Activated B cell treated with CpG ODN at 0.5 μM for 24 hours (primary cell): ENCODE measurements at regions of chr16 and their contacts with region 1.

Region 1: DNA sequence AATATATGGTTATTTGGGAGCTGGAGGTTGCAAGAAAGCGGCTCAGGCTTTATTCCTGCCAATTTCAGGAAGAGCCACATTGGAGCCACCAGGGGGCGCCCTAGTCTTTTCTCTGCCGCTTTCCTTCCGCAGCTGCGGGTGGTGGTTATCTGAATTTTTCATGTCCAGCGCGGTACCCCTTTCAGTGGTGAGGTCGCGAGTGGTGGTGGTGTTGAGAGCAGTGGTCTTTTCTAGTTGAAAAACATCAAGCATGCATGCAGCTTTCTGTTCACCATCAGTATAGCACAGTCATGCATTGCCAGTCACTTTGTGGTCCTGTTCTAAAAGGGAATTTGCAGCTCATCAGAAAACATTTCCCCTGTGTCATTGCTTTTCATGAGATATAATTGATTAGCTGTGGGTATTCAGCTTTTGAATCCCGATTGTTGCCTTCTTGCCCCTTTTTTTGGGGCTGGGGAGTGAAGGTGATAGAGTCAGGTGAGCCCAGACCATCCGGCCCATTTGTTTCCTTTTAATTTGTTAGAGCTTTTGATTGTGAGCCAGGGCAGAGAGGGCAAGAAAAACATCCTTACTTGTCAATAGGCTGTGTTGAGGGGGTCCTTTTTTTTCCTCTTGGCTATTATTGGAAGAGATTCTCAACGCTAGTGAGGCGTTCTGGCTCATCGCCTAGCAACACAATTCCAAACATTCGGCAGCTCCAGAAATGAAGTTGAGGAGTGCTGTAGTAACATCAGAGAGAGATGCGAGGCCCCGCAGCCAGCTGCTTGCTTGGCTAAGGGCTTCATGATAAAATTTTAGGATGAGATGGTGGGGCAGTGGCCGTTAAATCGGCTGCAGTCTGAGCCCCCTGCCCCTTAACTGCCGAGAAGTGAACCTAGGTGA is 119.0 kb downstream of the SNX29 start:
- DNase-seq: peak; percentile 50
- ATAC-seq: no peak
- H3K4me3 Mint-ChIP-seq: peak overlapping the region; percentile 44
- H3K27ac Mint-ChIP-seq: no peak overlapping the region
- H3K4me1 Mint-ChIP-seq: peaks cover 26% of the 10 kb centered on the region
- H3K27me3 Mint-ChIP-seq: no peaks in the 10 kb centered on the region
- CTCF ChIP-seq: peak; percentile 52

Region 2: DNA sequence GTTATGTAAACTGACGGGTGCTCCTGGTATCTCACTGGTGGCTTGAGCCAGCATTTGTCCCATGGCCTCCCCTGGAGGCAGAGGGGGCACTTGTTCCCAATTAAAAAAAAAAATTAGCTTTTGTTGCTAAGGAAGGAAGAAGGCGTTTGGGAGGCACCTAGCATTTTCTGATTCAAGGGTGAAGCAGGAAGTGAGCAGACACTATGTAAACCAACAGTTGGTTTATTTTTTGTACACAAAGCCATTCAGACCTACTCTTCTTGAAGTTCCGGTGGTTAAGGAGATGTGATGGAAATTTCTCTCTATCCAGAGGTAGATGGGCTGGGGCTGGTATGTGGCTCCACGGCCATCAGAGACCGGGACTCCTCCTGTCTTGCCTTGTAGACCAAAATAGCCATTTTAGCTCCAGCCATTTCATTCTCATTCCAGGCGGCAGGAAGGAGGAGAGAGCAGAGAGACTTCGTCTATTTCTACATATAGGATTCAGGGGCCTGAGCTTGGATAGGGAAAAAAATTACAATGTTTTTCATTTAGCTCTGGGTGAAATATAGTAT is 16.0 kb before region 1 on chr16:
- CTCF ChIA-PET with region 1: interaction called, 13 read pairs
- POLR2A ChIA-PET with region 1: interaction called, 4 read pairs
- intact Hi-C with region 1: no loop called
- DNase-seq: no peak
- ATAC-seq: no peak
- H3K4me3 Mint-ChIP-seq: no peak overlapping the region
- H3K27ac Mint-ChIP-seq: peak overlapping the region; percentile 88
- H3K4me1 Mint-ChIP-seq: peaks cover 58% of the 10 kb centered on the region
- H3K27me3 Mint-ChIP-seq: no peaks in the 10 kb centered on the region
- CTCF ChIP-seq: no peak

Region 3: DNA sequence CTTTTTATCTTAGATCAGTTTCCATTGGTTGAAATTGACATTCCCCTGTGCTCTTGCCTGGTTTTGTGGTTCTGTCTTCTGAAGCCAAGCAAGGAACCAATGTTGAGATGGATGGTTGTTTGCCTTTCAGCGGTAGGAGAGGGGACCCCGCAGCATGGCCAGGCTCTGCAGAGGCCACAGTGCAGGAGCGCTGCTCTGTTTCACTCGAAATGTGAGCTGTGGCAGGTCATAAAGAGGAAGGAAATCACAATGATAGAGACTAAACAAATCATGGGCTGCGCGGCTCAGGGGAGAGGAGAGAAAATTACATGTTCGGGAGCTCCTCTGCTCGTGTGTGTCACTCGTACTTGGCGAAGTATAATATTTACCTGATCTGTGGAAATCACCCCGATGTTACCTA is 29.2 kb after region 1 on chr16:
- CTCF ChIA-PET with region 1: interaction called, 11 read pairs
- POLR2A ChIA-PET with region 1: no interaction called
- intact Hi-C with region 1: no loop called
- DNase-seq: peak; percentile 20
- ATAC-seq: peak; percentile 80
- H3K4me3 Mint-ChIP-seq: peak overlapping the region; percentile 40
- H3K27ac Mint-ChIP-seq: peak overlapping the region; percentile 70
- H3K4me1 Mint-ChIP-seq: peaks cover 41% of the 10 kb centered on the region
- H3K27me3 Mint-ChIP-seq: no peaks in the 10 kb centered on the region
- CTCF ChIP-seq: no peak

Region 4: DNA sequence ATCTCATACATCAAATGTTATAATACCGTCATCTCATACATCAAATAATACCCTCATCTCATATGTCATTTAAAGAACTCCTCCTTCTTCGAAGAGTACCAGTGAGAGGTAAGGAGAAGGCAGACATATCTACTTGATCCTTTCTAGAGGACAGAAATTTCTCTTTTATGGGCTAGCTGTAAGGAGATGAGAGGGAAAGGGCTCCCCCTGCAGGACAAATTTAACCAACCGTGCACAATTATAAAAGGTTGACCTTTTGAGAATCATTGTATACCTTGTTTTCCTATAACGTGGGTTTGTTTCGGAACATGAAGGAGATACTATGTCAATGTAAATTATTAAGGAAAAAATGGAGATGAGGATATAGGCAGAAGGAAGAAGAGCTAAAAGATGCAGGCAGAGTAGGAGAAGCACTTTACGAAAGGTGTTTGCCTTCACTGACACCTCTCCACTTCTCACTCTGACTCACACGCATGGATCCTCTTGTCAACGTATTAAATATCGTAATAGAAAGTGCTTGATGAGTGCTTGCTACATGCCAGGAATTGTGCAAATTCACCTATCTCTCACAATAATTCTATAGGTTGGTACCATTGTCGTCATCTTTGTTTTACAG is 1358.5 kb after region 1 on chr16:
- CTCF ChIA-PET with region 1: no interaction called
- POLR2A ChIA-PET with region 1: no interaction called
- intact Hi-C with region 1: loop called (anchors 10 kb)
- DNase-seq: no peak
- ATAC-seq: no peak
- H3K4me3 Mint-ChIP-seq: no peak overlapping the region
- H3K27ac Mint-ChIP-seq: no peak overlapping the region
- H3K4me1 Mint-ChIP-seq: no peaks in the 10 kb centered on the region
- H3K27me3 Mint-ChIP-seq: no peaks in the 10 kb centered on the region
- CTCF ChIP-seq: no peak